Sigmoid colon (tissue), 7 donors: ENCODE measurements at regions of chr6 and their contacts with region 1.

Region 1: DNA sequence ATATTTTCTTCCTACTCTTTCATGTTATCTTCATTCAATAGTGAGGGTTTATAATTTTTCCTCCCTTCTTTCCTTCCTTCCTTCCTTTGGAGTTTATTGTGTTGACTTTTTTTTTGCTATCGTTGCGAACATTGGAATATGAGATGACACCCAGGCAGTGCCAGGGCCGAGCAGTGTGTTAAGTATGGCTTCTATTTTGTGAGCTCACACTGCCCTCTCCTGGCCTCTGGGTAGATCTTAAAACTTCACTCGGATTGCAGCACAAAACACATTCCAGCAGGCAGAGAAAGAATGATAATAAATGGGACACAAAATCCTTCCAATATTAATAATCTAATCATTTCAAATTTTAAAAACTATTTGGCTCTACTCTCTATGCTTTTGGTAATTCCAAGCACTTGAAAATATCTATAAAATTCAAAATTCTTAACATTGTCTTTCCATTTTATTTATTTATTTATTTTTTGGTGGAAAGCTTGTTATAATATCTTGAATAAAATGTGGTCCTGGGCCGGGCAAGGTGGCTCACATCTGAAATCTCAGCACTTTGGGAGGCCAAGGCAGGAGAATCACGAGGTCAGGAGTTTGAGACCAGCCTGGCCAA is 147.4 kb upstream of the OLIG3 start:
- DNase-seq: peak; percentile 81
- H3K4me3 ChIP-seq: no peak overlapping the region
- H3K27ac ChIP-seq: no peak overlapping the region
- H3K4me1 ChIP-seq: peaks cover 0 to 12% (median 5%) of the 10 kb centered on the region in 4 donors
- H3K27me3 ChIP-seq: no peaks in the 10 kb centered on the region
- CTCF ChIP-seq: peak; percentile 19 to 53 (median 50)
- EP300 ChIP-seq: no peak
- POLR2A ChIP-seq: no peak

Region 2: DNA sequence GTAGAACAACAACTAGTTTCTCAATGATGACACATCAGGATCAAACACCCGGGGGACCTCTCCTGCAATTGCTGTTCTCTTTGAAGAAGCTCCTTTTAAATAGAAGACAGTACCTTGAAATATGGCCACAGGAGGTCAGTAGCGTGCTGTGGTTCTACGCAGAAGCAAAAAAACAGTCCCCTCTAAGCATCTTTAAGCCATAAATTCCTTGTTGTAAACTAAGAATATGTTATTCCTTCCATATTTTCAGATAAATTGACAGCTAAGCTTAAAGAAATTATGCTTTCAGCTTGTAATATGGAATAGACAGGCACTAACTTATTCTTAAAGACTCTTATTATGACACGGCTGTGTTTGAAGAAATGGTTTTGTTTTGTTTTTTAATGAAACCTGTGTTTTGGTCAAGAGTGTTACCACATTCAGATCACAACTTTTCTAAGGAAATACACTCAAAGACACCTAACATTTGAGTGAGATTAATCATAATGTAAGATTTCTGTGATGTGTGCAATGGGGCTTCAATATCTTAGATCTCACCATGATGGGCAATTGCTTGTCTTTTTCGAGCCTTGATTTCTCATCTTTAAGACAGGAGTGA is 547.1 kb before region 1 on chr6:
- intact Hi-C with region 1: loop called (anchors 5 kb)
- DNase-seq: peak; percentile 75
- H3K4me3 ChIP-seq: no peak overlapping the region
- H3K27ac ChIP-seq: no peak overlapping the region
- H3K4me1 ChIP-seq: no peaks in the 10 kb centered on the region
- H3K27me3 ChIP-seq: no peaks in the 10 kb centered on the region
- CTCF ChIP-seq: peak; percentile 30 to 72 (median 50)
- EP300 ChIP-seq: no peak
- POLR2A ChIP-seq: no peak

Region 3: GRCh38 chr6:137271245-137272183 is 370.1 kb before region 1 on chr6:
- intact Hi-C with region 1: loop called (anchors 5 kb)
- DNase-seq: no peak
- H3K4me3 ChIP-seq: no peak overlapping the region
- H3K27ac ChIP-seq: no peak overlapping the region
- H3K4me1 ChIP-seq: peaks cover 0 to 5% (median 0%) of the 10 kb centered on the region in 4 donors
- H3K27me3 ChIP-seq: no peaks in the 10 kb centered on the region
- CTCF ChIP-seq: peak; percentile 55 to 80 (median 74)
- EP300 ChIP-seq: no peak
- POLR2A ChIP-seq: no peak

Region 4: GRCh38 chr6:137697267-137697938 is 55.8 kb after region 1 on chr6:
- intact Hi-C with region 1: no loop called
- DNase-seq: no peak
- H3K4me3 ChIP-seq: no peak overlapping the region
- H3K27ac ChIP-seq: peak overlapping the region; percentile 29 to 70 (median 50)
- H3K4me1 ChIP-seq: peaks cover 0 to 36% (median 21%) of the 10 kb centered on the region in 4 donors
- H3K27me3 ChIP-seq: no peaks in the 10 kb centered on the region
- CTCF ChIP-seq: no peak
- EP300 ChIP-seq: no peak
- POLR2A ChIP-seq: no peak